ENCODE measurements at regions of chr3 and their contacts with region 1.

Region 1: DNA sequence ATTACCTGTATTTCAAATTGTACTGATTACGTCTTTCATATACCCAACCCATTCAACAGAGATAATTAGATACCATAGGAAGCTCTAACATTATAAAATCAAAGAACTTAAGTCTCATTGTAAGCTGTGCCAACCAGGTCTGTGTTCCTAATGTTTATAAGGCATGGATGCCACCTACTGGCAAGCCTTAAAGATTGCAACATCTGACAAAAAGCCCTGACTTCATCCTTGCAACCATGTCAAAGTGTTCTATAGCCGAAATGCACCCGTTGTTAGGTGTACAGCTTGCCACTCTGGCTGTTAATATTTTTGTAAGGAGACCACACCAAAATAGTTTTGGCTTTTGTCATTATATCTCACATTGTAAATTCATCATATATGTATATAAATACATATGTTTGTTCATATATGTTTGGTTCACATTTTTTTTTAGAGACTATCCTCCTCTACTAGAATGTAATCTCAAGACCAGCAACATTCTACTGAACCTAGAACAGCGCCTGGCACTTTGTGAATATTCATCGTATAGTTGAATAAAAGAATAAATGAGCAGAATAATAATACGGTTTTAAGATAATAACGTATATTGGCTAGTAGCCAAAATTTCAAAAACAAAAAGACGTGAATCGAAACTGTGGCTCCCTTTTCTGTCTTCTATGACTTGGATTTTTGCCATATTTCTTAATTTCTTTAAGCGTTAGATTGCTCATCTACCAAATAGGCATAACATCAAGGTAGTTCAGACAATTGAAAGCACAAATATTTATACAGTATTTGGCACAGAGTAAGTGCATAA is 258.1 kb downstream of the TBL1XR1 start:
- DNase-seq: no peak
- ATAC-seq: peak; percentile 87 to 88

Region 2: DNA sequence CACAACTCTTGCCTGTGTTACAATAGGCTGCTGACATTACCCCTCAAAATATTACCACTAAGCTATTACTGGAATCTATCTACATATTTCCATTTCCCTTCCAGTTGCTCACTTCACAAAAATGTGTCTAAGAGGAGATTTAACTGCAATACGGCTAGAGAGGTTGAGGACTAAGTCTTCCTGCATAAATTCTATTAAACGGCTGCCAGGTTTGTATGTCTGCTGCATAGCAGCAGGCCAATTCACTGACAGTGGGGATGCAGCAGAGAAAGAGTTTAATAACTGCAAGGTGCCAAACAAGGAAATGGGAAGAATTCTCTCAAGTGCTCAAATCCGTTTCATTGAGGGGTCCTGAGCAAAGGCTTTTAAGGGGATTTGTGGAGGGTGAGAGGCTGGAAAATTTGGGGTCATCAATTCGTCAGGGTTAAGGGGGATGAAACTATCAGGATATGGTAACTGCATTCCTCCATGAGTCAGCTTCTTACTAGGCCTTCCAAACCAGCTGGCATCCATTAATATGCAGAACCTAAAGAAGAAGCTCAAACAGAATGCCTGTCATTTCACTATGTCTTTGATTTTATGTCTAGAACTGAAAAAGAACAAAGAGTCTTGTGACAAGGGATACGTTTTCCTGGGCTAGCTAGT is 417.6 kb before region 1 on chr3:
- intact Hi-C with region 1: loop called in 1 of 2 experiments (anchors 5 kb)
- DNase-seq: no peak
- ATAC-seq: no peak

Region 3: DNA sequence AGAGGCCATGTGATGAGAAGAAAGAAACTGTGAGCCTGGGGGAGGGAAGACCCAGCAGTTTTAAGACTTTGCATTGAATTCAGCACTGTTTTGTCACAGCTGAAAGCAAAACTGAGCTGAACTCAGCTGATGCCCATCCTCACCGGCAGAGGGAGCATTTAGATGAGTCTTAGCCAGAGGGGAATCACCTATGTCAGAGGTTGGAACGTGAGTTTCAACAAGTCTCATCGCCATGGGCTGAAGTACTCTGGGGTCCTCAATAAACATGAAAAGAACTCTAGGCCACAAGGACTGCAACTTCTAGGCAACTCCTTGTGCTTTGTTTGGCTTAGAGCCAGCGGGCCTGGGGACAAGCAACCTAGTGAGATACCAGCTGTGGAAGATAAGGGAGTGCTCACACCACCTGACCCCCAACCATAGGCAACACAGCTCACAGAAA is 66.4 kb before region 1 on chr3:
- intact Hi-C with region 1: loop called in 1 of 2 experiments (anchors 5 kb)
- DNase-seq: peak; percentile 29
- ATAC-seq: peak; percentile 72 to 74